ENCODE measurements at regions of chr17 and their contacts with region 1.

Region 1: DNA sequence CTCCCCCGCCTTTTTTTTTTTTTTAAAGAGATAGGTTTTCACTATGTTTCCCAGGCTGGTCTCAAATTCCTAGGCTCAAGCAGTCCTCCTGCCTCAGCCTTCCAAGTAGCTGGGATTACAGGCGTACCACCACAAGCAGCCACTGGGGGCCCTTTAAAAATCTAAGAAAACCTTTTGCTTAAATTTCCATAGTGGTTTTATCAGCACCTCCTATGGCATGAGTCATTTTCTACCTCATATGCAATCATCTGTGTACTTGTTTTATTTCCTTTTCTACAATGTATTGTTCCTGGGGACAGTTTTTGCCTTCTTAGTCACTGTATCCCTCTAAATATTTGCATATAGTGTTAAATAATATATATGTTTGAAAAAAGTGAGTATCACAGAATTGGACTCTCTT is 29.2 kb downstream of the GNA13 start:
- DNase-seq: peak; percentile 83
- H3K4me3 Mint-ChIP-seq: peak overlapping the region; percentile 62
- H3K27ac Mint-ChIP-seq: peak overlapping the region; percentile 92
- H3K4me1 Mint-ChIP-seq: peaks cover 61% of the 10 kb centered on the region
- H3K27me3 Mint-ChIP-seq: no peaks in the 10 kb centered on the region

Region 2: DNA sequence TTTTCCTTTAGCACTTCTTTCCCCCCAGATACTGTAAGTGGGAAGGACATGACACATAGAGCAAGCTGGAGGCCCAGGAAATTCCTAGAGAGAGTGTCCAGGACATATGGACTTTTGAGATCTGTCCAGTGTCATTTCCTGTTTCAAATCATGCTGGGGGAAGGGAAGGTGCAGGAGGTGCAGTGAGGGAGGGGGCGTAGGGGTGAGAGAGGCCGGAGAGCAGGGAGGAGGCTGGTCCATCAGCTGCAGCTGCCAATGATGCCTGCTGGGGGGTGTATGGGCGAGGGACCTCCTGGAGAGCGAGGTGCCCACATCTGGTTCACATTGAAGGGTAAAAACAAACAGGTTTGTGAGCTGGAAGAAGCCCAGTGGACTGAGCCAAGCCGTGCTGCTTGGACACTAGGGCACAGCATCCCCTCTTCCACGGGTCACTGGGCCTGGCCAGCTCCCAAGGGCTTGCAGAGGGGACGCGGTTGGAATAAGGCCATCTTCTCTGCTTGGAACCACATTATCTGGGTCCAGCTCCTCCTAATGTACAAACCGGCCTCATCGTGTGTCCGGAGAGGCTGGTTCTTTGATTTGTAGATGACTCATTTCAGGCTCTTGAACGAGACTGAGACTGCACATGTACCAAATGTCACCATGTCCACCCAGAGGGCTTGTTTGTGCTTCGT is 294.8 kb before region 1 on chr17:
- intact Hi-C with region 1: no loop called
- DNase-seq: no peak
- H3K4me3 Mint-ChIP-seq: no peak overlapping the region
- H3K27ac Mint-ChIP-seq: no peak overlapping the region
- H3K4me1 Mint-ChIP-seq: peaks cover 8% of the 10 kb centered on the region
- H3K27me3 Mint-ChIP-seq: no peaks in the 10 kb centered on the region

Region 3: DNA sequence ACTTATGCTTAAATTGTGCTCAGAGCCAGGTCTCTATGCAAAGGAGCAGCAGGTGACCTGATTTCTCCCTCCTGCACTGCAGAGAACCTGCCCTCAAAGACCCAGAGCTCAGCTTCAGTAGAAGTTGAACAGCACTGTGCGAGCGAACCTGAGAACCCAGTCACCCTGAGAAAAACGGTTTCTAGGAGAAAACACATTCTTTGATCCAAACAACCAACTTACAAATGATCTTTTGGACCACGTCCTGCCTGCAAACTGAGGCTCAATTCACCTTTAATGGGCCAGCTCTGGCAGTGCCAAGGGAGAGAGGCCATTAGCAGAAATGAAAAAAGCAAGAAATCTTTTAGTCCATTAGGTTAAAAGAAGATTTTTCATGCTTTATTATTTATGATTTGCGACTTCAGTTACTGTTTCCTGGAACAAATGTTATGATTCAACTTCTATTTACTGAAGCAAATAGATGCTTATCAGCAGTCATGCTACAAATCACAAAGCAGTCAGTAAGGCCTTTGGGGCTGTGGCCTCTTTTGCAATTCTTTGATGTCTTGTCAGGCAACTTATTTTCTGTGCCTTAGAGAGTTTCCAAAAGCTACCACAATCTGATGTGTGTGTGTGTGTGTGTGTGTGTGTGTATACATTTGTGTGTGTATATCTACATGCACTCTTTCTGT is 42.3 kb before region 1 on chr17:
- intact Hi-C with region 1: loop called (anchors 1 kb)
- DNase-seq: peak; percentile 88
- H3K4me3 Mint-ChIP-seq: peak overlapping the region; percentile 83
- H3K27ac Mint-ChIP-seq: peak overlapping the region; percentile 99
- H3K4me1 Mint-ChIP-seq: peaks cover 51% of the 10 kb centered on the region
- H3K27me3 Mint-ChIP-seq: no peaks in the 10 kb centered on the region

Region 4: GRCh38 chr17:65055348-65056261 is 28.3 kb after region 1 on chr17:
- intact Hi-C with region 1: loop called (anchors 5 kb)
- DNase-seq: peak; percentile 89
- H3K4me3 Mint-ChIP-seq: peak overlapping the region; percentile 97
- H3K27ac Mint-ChIP-seq: peak overlapping the region; percentile 92
- H3K4me1 Mint-ChIP-seq: peaks cover 43% of the 10 kb centered on the region
- H3K27me3 Mint-ChIP-seq: peaks cover 6% of the 10 kb centered on the region

Region 5: GRCh38 chr17:65122836-65123756 is 95.8 kb after region 1 on chr17:
- intact Hi-C with region 1: loop called (anchors 5 kb)
- DNase-seq: peak; percentile 96
- H3K4me3 Mint-ChIP-seq: peak overlapping the region; percentile 86
- H3K27ac Mint-ChIP-seq: peak overlapping the region; percentile 97
- H3K4me1 Mint-ChIP-seq: peaks cover 22% of the 10 kb centered on the region
- H3K27me3 Mint-ChIP-seq: peaks cover 12% of the 10 kb centered on the region

Measured in activated CD4-positive, alpha-beta T cell treated with anti-CD3 and anti-CD28 coated beads, Interleukin-2, amount 10 ng/mL, durations not matched to agents 24 days and 14 days (primary cell).